K562 (cell line): ENCODE measurements at regions of chr6 and their contacts with region 1.

Region 1: GRCh38 chr6:26568601-26569432 is 27.9 kb upstream of the ABT1 start:
- DNase-seq: peak; percentile 82 to 96 (median 84)
- ATAC-seq: peak; percentile 75
- H3K4me3 ChIP-seq: peak overlapping the region; percentile 75
- H3K27ac ChIP-seq: peak overlapping the region; percentile 92
- H3K4me1 ChIP-seq: peaks cover 3 to 8% of the 10 kb centered on the region in 2 experiments; a peak in 2 of 5 replicates
- H3K27me3 ChIP-seq: no peaks in the 10 kb centered on the region
- CTCF ChIP-seq: peak; percentile 80 to 83 (median 81)
- EP300 ChIP-seq: peak; percentile 76
- POLR2A ChIP-seq: peak; percentile 24; the same call in 1 of the 2 replicates
- RAD21 ChIP-seq: peak; percentile 88 to 90

Region 2: GRCh38 chr6:26175428-26176181 is 393.2 kb before region 1 on chr6:
- CTCF ChIA-PET with region 1: interaction called, 6 read pairs
- POLR2A ChIA-PET with region 1: interaction called, 5 read pairs
- in situ Hi-C with region 1: loop called (anchors 25 kb)
- intact Hi-C with region 1: loop called (anchors 1 kb)
- DNase-seq: peak; percentile 60 to 88 (median 71)
- ATAC-seq: peak; percentile 41
- H3K4me3 ChIP-seq: no peak overlapping the region
- H3K27ac ChIP-seq: no peak overlapping the region
- H3K4me1 ChIP-seq: peaks cover 14% of the 10 kb centered on the region in 2 experiments
- H3K27me3 ChIP-seq: no peaks in the 10 kb centered on the region
- CTCF ChIP-seq: peak; percentile 59 to 87 (median 77)
- EP300 ChIP-seq: no peak; the same call in 1 of the 2 replicates
- POLR2A ChIP-seq: no peak
- RAD21 ChIP-seq: peak; percentile 87 to 88

Region 3: DNA sequence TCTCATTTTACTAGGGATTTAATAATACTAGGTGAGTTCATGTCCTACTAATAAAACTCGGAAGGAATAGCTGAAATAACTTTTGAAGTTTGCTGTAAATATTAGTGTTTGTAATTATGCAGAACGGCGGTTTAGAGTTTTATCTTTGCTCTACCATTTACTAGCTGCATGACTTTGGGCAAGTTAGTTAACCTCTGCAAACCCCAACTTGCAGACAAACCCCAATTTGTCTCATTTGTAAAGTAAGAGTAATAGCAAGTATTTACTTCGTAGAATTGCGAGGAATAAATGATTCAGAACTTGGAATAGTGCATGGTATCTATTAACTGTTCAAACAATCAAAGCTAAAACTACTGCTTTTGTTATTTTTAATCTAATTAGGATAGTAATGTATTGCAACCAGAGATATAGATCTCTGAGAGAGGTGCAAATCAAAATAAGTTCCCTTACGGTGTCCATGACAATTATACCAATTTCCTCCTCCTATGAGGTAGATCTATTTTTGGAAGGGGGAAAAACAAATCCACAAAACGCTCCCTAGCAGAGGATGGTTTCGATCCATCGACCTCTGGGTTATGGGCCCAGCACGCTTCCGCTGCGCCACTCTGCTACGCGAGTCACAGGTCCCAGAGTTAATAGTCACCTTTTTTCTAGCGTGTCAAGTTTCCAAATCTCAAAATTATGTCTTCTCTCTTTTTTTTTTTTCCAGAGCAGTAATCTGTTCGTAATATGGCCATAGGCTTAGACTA is 238.9 kb before region 1 on chr6:
- CTCF ChIA-PET with region 1: no interaction called
- POLR2A ChIA-PET with region 1: interaction called, 8 read pairs
- in situ Hi-C with region 1: loop called (anchors 10 kb)
- intact Hi-C with region 1: loop called (anchors 5 kb)
- DNase-seq: peak in 3 of 4 experiments; percentile 56 to 88 (median 59)
- ATAC-seq: peak; percentile 40
- H3K4me3 ChIP-seq: peak overlapping the region; percentile 49
- H3K27ac ChIP-seq: peak overlapping the region; percentile 62; the same call in 2 of the 3 replicates
- H3K4me1 ChIP-seq: peaks cover 13 to 28% of the 10 kb centered on the region in 2 experiments; a peak in 4 of 5 replicates
- H3K27me3 ChIP-seq: no peaks in the 10 kb centered on the region
- CTCF ChIP-seq: no peak
- EP300 ChIP-seq: peak; percentile 81
- POLR2A ChIP-seq: no peak
- RAD21 ChIP-seq: 0 out of 4 replicates have a peak, but pooled peaks of 1 of the 2 experiments have one; percentile 4

Region 4: DNA sequence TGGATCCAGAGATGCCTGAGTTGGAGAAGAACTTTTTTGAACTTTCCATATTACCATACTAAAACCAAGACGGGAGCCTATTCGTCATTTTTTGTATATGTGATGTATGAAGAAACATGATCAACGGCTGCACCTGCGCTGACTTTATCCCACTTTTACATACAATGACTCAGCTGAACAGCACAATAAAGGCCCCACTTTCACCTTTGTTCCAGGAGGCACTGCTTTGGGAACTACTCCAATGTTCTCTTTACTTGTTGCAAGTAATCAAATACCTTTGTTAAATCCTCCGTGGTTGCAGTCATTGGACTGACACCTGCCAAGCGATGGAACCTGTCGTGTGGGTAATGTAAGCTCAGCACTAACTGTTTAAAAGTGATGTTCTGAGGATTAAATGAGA is 221.1 kb before region 1 on chr6:
- CTCF ChIA-PET with region 1: no interaction called
- POLR2A ChIA-PET with region 1: interaction called, 18 read pairs
- in situ Hi-C with region 1: no loop called
- intact Hi-C with region 1: no loop called
- DNase-seq: no peak
- ATAC-seq: no peak
- H3K4me3 ChIP-seq: no peak overlapping the region
- H3K27ac ChIP-seq: peak overlapping the region; percentile 1; the same call in 1 of the 3 replicates
- H3K4me1 ChIP-seq: peaks cover 10 to 55% of the 10 kb centered on the region in 2 experiments
- H3K27me3 ChIP-seq: no peaks in the 10 kb centered on the region
- CTCF ChIP-seq: no peak
- EP300 ChIP-seq: no peak
- POLR2A ChIP-seq: no peak
- RAD21 ChIP-seq: no peak

Region 5: DNA sequence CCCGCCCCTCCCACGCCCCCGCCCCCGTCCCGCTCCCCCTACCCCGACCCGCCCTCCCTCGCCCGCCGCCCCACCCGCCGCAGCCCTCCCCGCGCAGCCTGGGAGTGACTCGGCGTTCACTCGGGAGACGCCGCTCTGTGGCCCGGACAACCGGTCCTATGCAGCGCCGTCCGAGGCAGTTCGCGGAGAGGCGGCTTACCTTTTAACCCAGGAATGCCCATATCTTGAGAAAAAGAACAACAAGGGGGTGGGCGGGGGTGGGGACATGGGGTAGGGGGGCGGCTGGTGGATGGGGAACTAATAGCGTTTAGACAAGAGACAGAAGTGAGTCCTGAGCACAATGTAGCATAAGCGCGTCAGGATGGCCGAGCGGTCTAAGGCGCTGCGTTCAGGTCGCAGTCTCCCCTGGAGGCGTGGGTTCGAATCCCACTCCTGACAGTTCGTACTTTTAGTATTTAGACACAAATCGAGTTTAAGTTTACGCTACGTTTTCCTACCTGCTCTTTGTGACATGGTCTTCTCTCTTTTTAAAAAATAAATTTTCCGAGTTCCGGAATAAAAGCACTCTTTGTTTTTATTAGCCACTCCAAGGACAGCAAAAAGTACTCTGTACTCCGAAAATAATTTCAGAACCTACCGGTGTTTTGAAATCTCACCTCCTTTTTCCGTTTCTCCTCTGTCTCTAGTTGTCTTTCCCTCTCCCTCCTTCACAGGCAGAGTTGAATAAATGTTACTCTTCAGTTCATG is 47.8 kb before region 1 on chr6:
- CTCF ChIA-PET with region 1: no interaction called
- POLR2A ChIA-PET with region 1: interaction called, 3 read pairs
- in situ Hi-C with region 1: no loop called
- intact Hi-C with region 1: loop called (anchors 1 kb)
- DNase-seq: peak; percentile 94 to 98 (median 98)
- ATAC-seq: peak; percentile 78
- H3K4me3 ChIP-seq: peak overlapping the region; percentile 70
- H3K27ac ChIP-seq: peak overlapping the region; percentile 98
- H3K4me1 ChIP-seq: peaks cover 13 to 28% of the 10 kb centered on the region in 2 experiments; a peak in 4 of 5 replicates
- H3K27me3 ChIP-seq: no peaks in the 10 kb centered on the region
- CTCF ChIP-seq: peak in 1 of 3 experiments; percentile 8; a peak in 2 of 6 replicates
- EP300 ChIP-seq: peak; percentile 68
- POLR2A ChIP-seq: no peak
- RAD21 ChIP-seq: no peak

Region 6: DNA sequence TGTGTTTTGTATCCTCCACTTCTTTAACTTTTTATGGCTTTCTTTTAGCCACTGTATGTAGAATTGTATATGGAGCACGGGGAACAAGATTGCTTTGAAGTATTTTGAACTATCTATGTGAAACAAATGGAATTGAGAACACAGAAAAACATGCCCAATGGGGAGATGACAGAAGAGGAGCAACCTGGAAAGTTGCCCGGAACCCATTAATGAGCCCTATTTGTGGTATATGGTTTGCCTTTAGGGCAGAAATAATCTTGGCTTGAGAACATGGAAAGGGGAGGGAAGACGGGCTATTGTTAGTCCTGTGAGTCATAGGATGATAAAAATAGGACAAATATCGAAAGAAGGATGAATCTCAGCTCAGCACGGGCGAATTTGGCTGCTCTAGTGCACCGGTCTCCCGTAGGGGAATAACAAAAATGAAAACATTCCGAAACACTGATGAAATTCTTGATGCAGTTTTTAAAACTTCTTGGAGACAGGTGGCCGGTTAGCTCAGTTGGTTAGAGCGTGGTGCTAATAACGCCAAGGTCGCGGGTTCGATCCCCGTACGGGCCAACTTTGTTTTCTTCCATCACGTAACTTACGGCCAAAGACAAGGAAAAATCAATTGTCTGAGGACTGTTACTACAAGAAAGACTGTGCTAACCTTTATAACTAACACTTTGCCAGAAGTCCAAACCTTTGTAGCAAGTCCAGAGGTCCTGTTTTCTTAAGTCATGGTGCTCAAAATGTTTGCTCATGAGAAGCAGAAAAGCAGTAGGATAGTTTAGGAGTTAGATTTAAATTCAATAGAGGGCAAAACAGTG is 15.0 kb before region 1 on chr6:
- CTCF ChIA-PET with region 1: no interaction called
- POLR2A ChIA-PET with region 1: interaction called, 70 read pairs
- in situ Hi-C with region 1: no loop called
- intact Hi-C with region 1: loop called (anchors 1 kb)
- DNase-seq: peak; percentile 62 to 93 (median 72)
- ATAC-seq: peak; percentile 66
- H3K4me3 ChIP-seq: peak overlapping the region; percentile 51
- H3K27ac ChIP-seq: peak overlapping the region; percentile 74
- H3K4me1 ChIP-seq: peaks cover 5 to 20% of the 10 kb centered on the region in 2 experiments; a peak in 4 of 5 replicates
- H3K27me3 ChIP-seq: no peaks in the 10 kb centered on the region
- CTCF ChIP-seq: no peak
- EP300 ChIP-seq: peak; percentile 73; the same call in 1 of the 2 replicates
- POLR2A ChIP-seq: no peak
- RAD21 ChIP-seq: no peak; a peak in 1 of 4 replicates

Region 7: DNA sequence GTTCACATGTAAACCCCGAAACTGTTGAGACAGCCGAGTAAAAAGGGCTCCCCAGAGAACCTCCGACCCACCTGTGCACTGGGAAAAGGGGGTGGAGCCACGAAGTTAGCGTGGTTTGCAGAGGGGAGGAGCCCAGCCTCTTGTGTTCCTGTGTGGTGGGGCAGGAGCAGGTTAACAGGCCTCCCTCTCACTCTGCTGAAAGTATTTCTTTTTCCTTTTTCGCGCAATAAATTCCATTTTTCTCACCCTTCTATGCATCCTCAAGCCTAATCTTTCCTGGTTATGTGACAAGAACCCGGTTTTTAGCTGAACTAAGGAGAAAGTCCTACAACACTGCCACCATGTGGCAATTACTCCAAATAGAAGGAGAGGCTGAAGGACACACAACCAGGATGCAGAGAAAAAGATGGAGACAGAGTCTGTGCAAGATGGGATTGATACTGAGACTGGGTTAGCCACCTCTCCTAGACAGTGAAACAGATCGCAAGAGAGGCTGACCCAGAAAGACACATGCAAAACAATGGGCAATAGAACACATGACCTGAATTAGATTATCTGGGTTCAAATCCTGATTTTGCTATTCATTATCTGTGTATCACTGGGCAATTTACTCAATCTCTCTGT is 510.0 kb after region 1 on chr6:
- CTCF ChIA-PET with region 1: no interaction called
- POLR2A ChIA-PET with region 1: interaction called, 3 read pairs
- in situ Hi-C with region 1: no loop called
- intact Hi-C with region 1: loop called (anchors 1 kb)
- DNase-seq: peak; percentile 48 to 81 (median 59)
- ATAC-seq: peak; percentile 99
- H3K4me3 ChIP-seq: peak overlapping the region; percentile 51
- H3K27ac ChIP-seq: no peak overlapping the region; the same call in 2 of the 3 replicates
- H3K4me1 ChIP-seq: no peaks in the 10 kb centered on the region; a peak in 1 of 5 replicates
- H3K27me3 ChIP-seq: no peaks in the 10 kb centered on the region
- CTCF ChIP-seq: peak; percentile 68 to 94 (median 92)
- EP300 ChIP-seq: 0 out of 2 replicates have a peak, but pooled peaks have one; percentile 5
- POLR2A ChIP-seq: no peak
- RAD21 ChIP-seq: peak; percentile 96 to 98